ENCODE measurements at regions of chr4 and their contacts with region 1.

Region 1: DNA sequence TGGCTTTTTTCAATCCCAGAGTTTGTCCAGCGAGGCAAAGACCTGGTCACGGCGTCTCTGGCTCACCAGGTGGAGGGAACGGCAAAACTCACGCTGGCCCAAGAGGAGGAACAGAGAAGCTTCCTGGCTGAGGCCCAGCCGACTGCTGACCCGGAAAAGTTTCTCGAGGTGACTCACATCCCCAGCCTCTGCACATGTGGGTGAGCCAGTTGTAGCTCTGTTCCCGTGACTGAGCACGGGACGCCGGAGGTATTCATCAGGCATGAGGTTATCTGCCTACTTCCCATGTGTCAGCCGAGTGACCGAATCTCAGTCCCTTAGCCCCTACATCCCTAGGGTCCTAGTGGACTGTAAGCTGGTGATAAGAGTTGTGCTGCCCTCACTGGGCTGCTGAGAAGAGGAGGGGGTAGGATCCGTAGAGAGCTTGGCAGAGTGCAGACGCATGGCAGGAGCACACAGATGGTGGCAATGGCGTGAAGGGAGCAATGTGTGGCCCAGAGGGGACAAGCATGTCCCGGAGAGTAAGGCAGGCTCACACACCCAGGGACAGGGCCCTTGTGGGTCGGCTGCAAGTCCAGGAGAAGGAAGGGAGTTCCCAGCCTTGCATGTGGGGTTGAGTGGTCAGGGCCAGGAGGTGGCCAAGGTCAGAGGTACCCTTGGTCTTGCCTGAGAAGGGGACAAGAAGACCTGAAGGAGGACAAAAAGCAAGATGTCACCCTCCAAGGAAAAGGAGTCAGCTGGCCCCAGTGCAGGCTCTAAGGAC is 42.9 kb downstream of the EVC start:
- DNase-seq: no peak

Region 2: GRCh38 chr4:5037553-5038551 is 716.1 kb before region 1 on chr4:
- intact Hi-C with region 1: loop called in 1 of 2 experiments (anchors 2 kb)
- DNase-seq: no peak

Region 3: DNA sequence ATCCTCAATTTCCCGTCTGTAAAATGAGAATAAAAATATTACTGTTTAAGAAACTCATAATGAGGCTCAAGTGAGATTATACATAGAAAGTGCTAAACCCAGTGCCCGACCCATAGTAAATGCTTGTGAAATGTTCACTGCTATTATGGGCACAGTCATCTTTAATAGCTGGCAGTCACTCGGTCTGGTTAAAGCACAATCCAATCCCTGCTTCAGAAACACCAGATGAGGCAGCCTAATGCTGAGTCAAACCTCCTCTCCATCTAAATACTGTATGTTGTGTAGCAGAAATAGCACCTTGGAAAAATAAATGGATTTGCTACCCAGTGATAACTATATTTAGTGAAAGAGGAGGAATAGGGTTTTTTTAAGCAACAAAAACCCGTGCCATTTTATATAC is 60.1 kb before region 1 on chr4:
- intact Hi-C with region 1: no loop called
- DNase-seq: no peak